BJ (cell line): ENCODE measurements at regions of chr1 and their contacts with region 1.

Region 1: GRCh38 chr1:119275145-119276134 is 93.1 kb upstream of the HAO2 start:
- DNase-seq: peak; percentile 43
- H3K4me3 ChIP-seq: no peak overlapping the region
- H3K27me3 ChIP-seq: 0 out of 2 replicates have a peak, but pooled peaks cover 2% of the 10 kb centered on the region
- CTCF ChIP-seq: peak; percentile 91

Region 2: DNA sequence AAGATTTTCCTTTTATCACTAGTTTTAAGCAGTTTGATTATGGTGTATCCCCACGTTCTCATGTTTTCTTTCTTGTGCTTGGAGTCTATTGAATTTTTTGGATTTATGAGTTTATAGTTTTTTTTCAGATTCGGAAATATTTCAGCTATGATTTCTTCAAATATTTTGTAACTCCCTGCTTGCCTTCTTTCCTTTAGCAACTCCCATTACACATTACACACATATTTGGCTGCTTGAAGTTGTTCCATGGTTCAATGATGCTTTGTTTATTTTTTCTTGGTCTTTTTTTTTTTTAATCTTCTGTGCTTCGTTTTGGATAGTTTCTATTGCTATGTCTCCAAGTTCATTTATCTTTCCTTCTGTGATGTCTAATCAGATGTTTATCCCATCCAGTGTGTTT is 86.5 kb before region 1 on chr1:
- CTCF ChIA-PET with region 1: no interaction called
- POLR2A ChIA-PET with region 1: no interaction called
- DNase-seq: no peak
- H3K4me3 ChIP-seq: no peak overlapping the region
- H3K27me3 ChIP-seq: no peaks in the 10 kb centered on the region
- CTCF ChIP-seq: no peak

Region 3: DNA sequence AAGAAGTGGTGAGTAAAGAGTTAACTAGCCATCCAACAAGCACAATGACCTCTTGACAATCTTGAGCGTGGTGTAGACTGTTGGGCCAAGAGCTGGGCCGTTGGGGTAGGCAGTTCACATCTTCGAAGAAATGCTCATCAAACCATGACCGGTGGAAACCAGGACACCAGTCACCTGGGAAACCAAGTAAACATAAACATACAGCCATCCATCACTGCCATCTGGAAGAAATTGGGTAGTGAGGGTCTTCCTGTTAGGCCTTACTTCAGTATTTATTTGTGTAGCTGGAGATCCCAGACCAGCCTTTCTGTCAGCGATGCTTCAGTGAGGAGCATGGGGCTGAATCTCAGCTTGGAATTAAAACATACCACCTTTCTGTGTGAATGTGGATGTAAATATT is 14.9 kb before region 1 on chr1:
- CTCF ChIA-PET with region 1: interaction called, 10 read pairs
- POLR2A ChIA-PET with region 1: no interaction called
- DNase-seq: no peak
- H3K4me3 ChIP-seq: no peak overlapping the region
- H3K27me3 ChIP-seq: no peaks in the 10 kb centered on the region
- CTCF ChIP-seq: no peak

Region 4: DNA sequence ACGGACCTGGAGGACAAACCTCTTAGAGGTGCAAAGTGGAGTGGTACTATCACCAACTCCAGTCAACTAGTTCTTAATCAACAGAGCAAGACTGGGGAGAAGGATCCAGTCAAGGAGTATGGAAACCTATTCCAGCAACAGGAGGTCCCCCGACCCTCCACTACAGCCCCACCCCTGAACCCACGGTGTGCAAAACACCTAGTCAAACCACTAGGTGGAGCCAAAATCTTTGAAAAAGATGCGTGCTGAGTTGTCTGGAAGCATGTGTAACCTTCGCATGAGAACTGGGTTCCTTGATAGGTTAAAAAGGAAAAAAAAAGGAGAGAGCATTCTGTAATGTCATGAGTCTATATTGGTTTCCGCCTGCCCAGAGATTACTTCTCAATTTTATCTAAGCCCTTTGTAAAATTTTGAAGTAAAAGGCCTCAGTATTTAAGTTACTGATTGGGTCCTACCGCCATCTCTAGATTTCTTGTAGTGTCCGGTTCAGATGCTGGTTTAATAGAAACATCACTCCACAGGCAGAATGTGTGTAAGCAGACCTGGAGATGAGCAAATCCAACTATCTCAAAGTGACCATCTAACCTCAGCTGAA is 11.2 kb after region 1 on chr1:
- CTCF ChIA-PET with region 1: interaction called, 17 read pairs
- POLR2A ChIA-PET with region 1: no interaction called
- DNase-seq: no peak
- H3K4me3 ChIP-seq: no peak overlapping the region
- H3K27me3 ChIP-seq: no peaks in the 10 kb centered on the region
- CTCF ChIP-seq: peak; percentile 44

Region 5: DNA sequence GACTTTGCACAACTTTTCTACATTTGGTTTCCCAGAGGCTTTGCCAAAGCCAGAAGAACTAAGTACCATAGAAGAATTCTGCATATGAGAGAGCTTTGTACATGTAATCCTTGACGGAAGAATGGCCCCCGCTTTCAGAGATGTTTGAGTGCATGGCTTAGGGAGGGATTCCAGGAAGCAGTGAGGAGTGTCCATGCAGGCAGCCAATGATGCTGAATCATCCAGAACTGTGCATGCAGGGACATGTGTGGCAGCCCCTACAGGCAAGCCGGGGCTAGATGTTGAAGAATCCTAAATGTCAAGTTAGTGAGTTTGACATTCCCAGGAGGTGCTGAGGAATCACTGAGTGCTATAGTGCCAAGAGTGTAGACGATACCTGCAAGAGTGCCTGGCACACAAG is 83.2 kb after region 1 on chr1:
- CTCF ChIA-PET with region 1: interaction called, 22 read pairs
- POLR2A ChIA-PET with region 1: no interaction called
- DNase-seq: no peak
- H3K4me3 ChIP-seq: no peak overlapping the region
- H3K27me3 ChIP-seq: 0 out of 2 replicates have a peak, but pooled peaks cover 2% of the 10 kb centered on the region
- CTCF ChIP-seq: no peak

Region 6: DNA sequence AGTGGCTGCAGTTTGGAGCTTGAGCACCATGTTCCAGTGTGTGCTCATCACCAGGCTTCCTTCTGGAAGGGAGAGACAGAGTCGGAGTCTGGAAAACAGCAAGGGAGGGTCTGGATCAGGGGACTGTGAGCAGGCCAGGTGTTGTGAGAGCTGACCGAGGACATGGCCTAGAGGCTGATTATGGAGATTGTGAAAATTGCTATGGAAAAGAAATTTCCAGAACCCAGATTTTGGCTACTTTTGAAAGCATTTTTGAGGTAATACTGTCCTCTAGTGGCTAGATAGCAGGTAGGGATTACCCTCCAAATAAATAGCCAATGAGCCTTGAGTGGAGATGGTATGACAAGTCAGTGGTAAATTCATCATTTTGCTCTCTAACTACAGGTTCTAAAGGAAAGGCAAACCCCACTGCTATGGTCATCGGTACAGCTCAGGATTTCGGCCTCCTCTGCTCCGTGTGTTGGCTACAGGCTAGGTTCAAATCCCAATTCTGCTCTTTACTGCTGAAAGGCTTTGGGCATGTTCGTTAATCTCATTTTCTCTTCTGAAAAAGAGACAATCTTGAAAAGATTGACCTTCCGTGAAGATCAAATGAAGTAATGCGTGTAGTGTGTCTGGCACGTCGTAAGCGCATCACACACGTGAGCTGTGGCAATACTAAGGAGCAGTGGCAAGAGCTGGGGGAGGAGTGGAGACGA is 92.1 kb after region 1 on chr1:
- CTCF ChIA-PET with region 1: interaction called, 161 read pairs
- POLR2A ChIA-PET with region 1: no interaction called
- DNase-seq: peak; percentile 2
- H3K4me3 ChIP-seq: no peak overlapping the region
- H3K27me3 ChIP-seq: peaks cover 3% of the 10 kb centered on the region
- CTCF ChIP-seq: peak; percentile 95

Region 7: DNA sequence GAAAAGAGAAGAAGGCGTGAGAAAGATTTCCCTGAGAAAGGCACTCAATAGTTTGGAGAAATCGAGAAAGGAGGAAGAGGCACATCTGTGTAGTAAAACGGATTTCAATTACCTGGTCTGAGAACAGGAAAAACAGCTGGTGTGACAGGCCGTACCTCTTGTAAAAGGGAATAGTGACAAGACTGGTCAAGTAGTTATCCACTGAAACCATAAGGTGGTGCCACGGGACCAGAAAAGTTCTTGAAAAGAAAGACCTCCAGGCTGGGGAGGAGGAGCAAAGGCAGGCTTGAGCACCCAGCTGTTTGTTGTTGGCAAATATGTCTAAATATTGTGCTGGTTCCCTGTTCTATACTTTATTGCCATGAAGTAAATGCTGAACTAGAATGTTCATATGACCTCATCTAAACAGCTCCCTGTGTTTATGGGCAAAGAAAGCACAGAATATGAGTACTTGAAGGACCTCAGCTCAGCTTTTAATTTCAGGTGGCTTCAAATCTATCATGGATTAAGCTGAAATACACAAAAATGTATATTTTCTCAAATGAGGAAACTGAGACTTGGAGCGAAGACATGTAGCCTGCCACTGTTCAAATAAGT is 97.1 kb after region 1 on chr1:
- CTCF ChIA-PET with region 1: interaction called, 161 read pairs
- POLR2A ChIA-PET with region 1: no interaction called
- DNase-seq: no peak
- H3K4me3 ChIP-seq: no peak overlapping the region
- H3K27me3 ChIP-seq: peaks cover 5% of the 10 kb centered on the region
- CTCF ChIP-seq: no peak